ENCODE measurements at regions of chr20 and their contacts with region 1.

Region 1: DNA sequence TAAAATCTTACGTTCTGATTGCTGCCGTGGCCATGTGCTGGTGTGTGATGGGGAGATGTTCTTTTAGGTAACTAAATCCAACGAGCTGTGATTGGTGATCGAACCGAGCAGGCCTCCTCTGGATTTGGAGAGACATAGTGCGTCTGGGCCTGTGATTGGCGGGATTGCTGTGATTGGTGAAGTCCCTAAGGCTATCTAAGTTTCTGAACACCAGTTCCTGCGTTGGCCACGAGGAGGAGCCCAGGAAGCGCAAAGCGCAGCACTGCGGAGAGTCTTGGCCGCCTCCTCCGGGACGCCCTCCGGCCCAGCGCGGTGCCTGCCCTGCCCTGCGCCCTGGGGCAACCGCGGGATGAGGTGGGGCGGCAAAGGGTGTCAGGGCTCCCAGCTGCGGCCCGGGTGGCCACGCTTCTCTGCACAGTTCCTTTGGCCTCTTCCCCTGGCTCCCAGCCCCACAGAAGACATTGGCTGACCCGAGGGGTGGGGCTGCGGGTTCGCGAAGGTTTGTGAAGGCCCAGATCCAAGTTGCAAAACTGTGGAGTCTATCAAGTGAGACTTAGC is 33.0 kb downstream of the HNF4A start:
- DNase-seq: peak; percentile 68 to 73
- H3K4me3 ChIP-seq: no peak overlapping the region
- H3K27ac ChIP-seq: no peak overlapping the region
- H3K4me1 ChIP-seq: no peaks in the 10 kb centered on the region; the same call in 1 of the 2 replicates
- H3K27me3 ChIP-seq: no peaks in the 10 kb centered on the region
- CTCF ChIP-seq: peak; percentile 95

Region 2: DNA sequence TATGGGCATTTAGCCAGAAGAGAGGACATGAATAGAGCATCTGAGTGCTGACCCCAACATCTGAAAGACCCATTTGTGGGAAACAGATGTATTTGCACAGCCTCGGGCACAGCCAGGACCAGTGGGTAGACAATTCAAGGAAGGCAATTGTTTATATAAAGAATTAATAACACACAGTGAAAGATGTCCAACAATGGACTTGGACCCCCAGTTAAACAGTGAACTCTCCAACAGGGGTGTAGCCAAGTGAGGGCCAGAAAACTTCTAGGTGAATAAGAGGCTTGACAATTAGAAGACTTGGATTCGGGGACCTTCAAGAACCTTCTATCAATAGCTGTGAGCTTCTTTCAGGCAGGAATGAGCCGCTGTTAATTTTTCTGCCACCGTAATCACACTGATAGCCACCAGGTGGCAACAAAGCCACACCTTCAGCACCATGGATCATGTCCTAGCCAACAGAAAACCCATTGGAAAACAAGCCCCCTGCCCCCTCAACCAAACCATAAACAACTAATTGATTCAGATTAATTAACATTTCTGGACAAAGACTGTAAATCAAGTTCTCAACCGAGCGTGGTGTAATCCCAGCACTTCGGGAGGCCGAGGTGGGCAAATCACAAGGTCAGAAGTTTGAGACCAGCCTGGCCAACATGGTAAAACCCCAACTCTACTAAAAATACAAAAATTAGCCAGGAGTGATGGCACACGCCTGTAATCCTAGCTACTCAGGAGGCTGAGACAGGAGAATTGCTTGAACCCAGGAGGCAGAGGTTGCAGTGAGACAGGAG is 939.6 kb before region 1 on chr20:
- CTCF ChIA-PET with region 1: no interaction called
- POLR2A ChIA-PET with region 1: no interaction called
- intact Hi-C with region 1: loop called (anchors 1 kb)
- DNase-seq: peak in 1 of 2 experiments; percentile 59
- H3K4me3 ChIP-seq: no peak overlapping the region
- H3K27ac ChIP-seq: no peak overlapping the region
- H3K4me1 ChIP-seq: no peaks in the 10 kb centered on the region
- H3K27me3 ChIP-seq: peaks cover 5% of the 10 kb centered on the region
- CTCF ChIP-seq: peak; percentile 92

Region 3: DNA sequence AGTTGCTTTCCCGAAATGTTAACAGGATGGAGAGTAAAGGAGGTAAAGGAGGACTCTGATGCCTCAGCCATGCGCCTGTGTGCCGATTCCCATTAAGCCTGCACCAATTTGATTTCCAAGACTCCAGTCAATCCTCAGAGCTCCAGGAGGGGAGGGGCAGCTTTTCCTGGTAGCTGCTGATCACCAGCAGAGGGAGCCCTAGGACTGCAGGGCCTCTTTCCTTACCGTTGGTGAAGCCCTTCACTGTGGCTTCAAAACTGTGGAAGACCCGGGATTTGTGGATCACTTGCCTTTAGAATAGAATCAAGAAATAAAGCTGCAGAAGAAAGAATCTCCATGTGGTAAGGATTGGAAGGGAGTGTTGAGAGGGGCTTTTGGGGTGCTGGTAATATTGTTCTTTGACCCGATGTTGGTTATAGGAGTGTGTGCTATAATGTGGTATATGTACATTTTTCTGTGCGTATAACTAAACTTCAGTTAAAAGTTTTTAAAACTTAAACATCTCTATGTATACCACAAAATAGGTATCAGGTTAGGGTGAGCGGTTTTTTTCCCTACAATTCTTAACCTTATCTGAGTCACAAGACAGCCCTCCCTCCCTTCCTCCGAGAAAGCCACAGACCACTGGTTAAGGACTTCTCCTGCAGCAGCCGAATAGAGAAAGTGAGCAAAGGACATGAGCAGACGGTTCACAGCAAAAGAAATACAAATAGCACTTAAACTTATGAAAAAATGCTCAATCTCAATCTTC is 171.0 kb before region 1 on chr20:
- CTCF ChIA-PET with region 1: interaction called, 5 read pairs
- POLR2A ChIA-PET with region 1: interaction called, 11 read pairs
- intact Hi-C with region 1: loop called (anchors 1 kb)
- DNase-seq: peak; percentile 58 to 76
- H3K4me3 ChIP-seq: no peak overlapping the region
- H3K27ac ChIP-seq: no peak overlapping the region
- H3K4me1 ChIP-seq: no peaks in the 10 kb centered on the region; the same call in 1 of the 2 replicates
- H3K27me3 ChIP-seq: no peaks in the 10 kb centered on the region
- CTCF ChIP-seq: peak; percentile 98

Region 4: DNA sequence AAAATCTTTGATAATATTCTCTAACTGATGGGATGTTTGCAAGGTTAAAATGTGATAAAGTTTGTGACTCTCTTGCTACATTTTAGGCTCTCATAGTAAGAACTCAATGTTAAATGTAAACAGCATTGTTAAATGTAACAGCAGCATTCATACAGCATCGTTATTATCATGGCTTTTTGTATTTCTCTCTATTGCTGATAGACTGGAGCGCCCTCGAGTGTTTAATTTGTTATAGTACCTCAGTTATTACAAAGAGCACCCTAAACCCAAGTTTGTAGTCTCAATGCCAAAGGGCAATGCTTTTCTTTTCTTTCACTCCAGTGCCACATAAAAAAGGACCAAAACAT is 72.2 kb after region 1 on chr20:
- CTCF ChIA-PET with region 1: interaction called, 4 read pairs
- POLR2A ChIA-PET with region 1: no interaction called
- intact Hi-C with region 1: loop called (anchors 1 kb)
- DNase-seq: peak in 1 of 2 experiments; percentile 23
- H3K4me3 ChIP-seq: no peak overlapping the region
- H3K27ac ChIP-seq: no peak overlapping the region
- H3K4me1 ChIP-seq: no peaks in the 10 kb centered on the region
- H3K27me3 ChIP-seq: no peaks in the 10 kb centered on the region
- CTCF ChIP-seq: peak; percentile 78

Region 5: GRCh38 chr20:44733341-44734069 is 345.0 kb after region 1 on chr20:
- CTCF ChIA-PET with region 1: no interaction called
- POLR2A ChIA-PET with region 1: no interaction called
- intact Hi-C with region 1: loop called (anchors 2 kb)
- DNase-seq: peak; percentile 55 to 78
- H3K4me3 ChIP-seq: no peak overlapping the region
- H3K27ac ChIP-seq: no peak overlapping the region
- H3K4me1 ChIP-seq: peaks cover 45% of the 10 kb centered on the region
- H3K27me3 ChIP-seq: no peaks in the 10 kb centered on the region
- CTCF ChIP-seq: peak; percentile 96

Region 6: DNA sequence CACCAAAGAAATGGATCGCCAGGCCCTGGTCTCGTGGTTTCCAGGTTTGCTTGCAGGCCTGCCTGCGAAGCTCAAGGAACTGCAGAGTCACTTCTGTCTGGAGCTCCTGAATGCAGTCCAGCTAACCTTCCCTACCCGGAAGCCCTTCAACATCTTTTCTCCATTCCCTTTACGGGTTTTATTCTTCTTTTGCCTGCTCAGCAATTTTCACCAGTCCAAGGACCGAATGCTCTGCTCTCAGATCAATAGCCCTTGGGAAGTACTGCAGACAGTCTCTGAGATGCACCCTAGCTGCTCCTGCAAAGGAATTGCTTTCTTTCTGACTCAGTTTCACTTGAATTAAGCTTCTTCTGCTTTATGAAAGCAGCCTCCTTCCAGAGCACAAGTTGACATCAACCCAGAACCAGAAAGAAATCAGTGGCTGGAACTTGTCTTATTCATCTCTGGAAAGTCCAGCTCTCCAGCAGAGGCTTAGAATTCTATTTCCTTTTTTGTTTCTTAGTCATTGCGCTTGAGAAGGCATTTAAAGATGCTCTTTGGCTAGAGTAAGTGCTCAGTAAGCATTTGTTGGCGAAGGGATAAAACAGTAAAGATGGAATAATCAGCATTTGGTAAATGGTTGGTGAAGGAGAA is 478.3 kb after region 1 on chr20:
- CTCF ChIA-PET with region 1: no interaction called
- POLR2A ChIA-PET with region 1: no interaction called
- intact Hi-C with region 1: loop called (anchors 1 kb)
- DNase-seq: no peak
- H3K4me3 ChIP-seq: no peak overlapping the region
- H3K27ac ChIP-seq: no peak overlapping the region
- H3K4me1 ChIP-seq: no peaks in the 10 kb centered on the region
- H3K27me3 ChIP-seq: 0 out of 2 replicates have a peak, but pooled peaks cover 17% of the 10 kb centered on the region
- CTCF ChIP-seq: no peak